Sigmoid colon (tissue), 7 donors: ENCODE measurements at regions of chr6 and their contacts with region 1.

Region 1: GRCh38 chr6:161694995-161695394 is 421.1 kb upstream of the AGPAT4 start:
- DNase-seq: no peak
- H3K4me3 ChIP-seq: no peak overlapping the region
- H3K27ac ChIP-seq: no peak overlapping the region
- H3K4me1 ChIP-seq: no peaks in the 10 kb centered on the region
- H3K27me3 ChIP-seq: no peaks in the 10 kb centered on the region
- CTCF ChIP-seq: peak in 3 of 4 experiments; percentile 8 to 47 (median 29)
- EP300 ChIP-seq: no peak
- POLR2A ChIP-seq: no peak

Region 2: GRCh38 chr6:161418463-161418945 is 276.5 kb before region 1 on chr6:
- intact Hi-C with region 1: loop called (anchors 2 kb)
- DNase-seq: no peak
- H3K4me3 ChIP-seq: no peak overlapping the region
- H3K27ac ChIP-seq: peak overlapping the region in 2 of 4 donors; percentile 39 to 52
- H3K4me1 ChIP-seq: peaks cover 0 to 19% (median 3%) of the 10 kb centered on the region in 4 donors
- H3K27me3 ChIP-seq: no peaks in the 10 kb centered on the region
- CTCF ChIP-seq: peak in 3 of 4 experiments; percentile 61 to 71 (median 67)
- EP300 ChIP-seq: no peak
- POLR2A ChIP-seq: no peak